ENCODE measurements at regions of chr1 and their contacts with region 1.

Region 1: DNA sequence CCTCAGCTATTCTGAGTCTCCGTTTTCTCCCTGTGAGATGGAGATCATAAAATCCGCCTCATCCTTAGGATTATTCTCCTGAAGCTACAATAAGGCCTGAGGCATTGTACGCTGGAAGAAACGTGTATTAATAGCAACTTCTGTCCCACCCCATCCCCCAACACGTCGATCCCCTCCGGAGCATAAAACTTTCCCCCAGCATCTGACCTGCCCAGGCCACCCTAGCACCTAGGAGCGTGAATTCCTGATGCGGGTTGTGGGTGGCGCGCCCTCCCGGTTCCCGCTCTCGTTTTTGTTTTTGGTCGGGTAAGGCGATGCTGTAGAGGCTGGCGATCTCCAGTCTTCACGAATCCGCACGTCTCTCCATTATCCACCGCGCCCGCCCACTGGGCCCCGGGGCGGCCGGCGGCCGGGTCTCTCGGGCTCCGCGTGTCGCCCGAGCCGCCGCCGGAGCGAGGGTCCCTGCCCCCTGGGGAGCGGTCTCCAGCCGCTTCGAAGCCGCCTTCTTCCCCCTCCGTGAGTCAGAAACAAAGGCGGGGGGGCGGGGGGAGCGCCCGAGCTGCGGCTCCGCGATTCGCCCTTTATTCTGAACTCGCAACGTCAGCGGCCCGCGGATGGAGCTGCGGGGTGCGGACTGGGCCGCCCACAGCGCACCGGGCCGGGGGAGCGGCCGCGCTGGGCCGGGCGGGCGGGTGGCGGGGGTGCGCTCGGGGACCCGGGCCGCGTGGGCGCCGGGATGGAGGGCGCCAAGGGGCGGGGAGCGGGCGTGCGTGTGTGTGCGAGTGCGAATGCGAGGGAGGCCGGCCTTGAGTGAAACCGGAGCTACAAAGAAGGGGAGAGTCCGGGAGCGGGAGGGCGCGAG is at the start of gene PLEKHO1:
- DNase-seq: peak; percentile 82 to 87 (median 84)
- H3K4me3 ChIP-seq: peak within 1 kb of the TSS; percentile 89 to 94 (median 93)
- H3K4me3 Mint-ChIP-seq: peak within 1 kb of the TSS; percentile 99
- H3K27ac ChIP-seq: peak within 1 kb of the TSS; percentile 53 to 97
- H3K27ac Mint-ChIP-seq: peak within 1 kb of the TSS; percentile 87 to 97 (median 91)
- H3K4me1 ChIP-seq: peaks cover 46 to 65% of the 10 kb centered on the region in 2 donors
- H3K4me1 Mint-ChIP-seq: peaks cover 69% of the 10 kb centered on the region
- H3K27me3 ChIP-seq: no peaks in the 10 kb centered on the region
- H3K27me3 Mint-ChIP-seq: peaks cover 15 to 26% (median 16%) of the 10 kb centered on the region in 3 donors
- CTCF ChIP-seq: no peak
- polyA plus RNA-seq, gene PLEKHO1: 87.2 to 170 (median 110) TPM

Region 2: GRCh38 chr1:150094734-150095265 is 54.7 kb before region 1 on chr1:
- intact Hi-C with region 1: loop called in 1 of 2 experiments (anchors 5 kb)
- DNase-seq: no peak
- H3K4me3 ChIP-seq: no peak overlapping the region
- H3K4me3 Mint-ChIP-seq: no peak overlapping the region
- H3K27ac ChIP-seq: no peak overlapping the region
- H3K27ac Mint-ChIP-seq: peak overlapping the region in 1 of 7 donors; percentile 2
- H3K4me1 ChIP-seq: peaks cover 15% of the 10 kb centered on the region in 2 donors
- H3K4me1 Mint-ChIP-seq: peaks cover 24% of the 10 kb centered on the region
- H3K27me3 ChIP-seq: no peaks in the 10 kb centered on the region
- H3K27me3 Mint-ChIP-seq: peaks cover 0 to 2% (median 0%) of the 10 kb centered on the region in 3 donors
- CTCF ChIP-seq: no peak

Region 3: GRCh38 chr1:150162862-150163706 is 13.6 kb after region 1 on chr1:
- intact Hi-C with region 1: loop called in 1 of 2 experiments (anchors 1 kb)
- DNase-seq: peak; percentile 87 to 95 (median 89)
- H3K4me3 ChIP-seq: peak overlapping the region; percentile 35 to 83 (median 42)
- H3K4me3 Mint-ChIP-seq: peak overlapping the region; percentile 82 to 93
- H3K27ac ChIP-seq: peak overlapping the region; percentile 90 to 97
- H3K27ac Mint-ChIP-seq: peak overlapping the region; percentile 95 to 99 (median 99)
- H3K4me1 ChIP-seq: peaks cover 82 to 88% of the 10 kb centered on the region in 2 donors
- H3K4me1 Mint-ChIP-seq: peaks cover 84% of the 10 kb centered on the region
- H3K27me3 ChIP-seq: no peaks in the 10 kb centered on the region
- H3K27me3 Mint-ChIP-seq: no peaks in the 10 kb centered on the region
- CTCF ChIP-seq: no peak

Measured in CD14-positive monocyte (primary cell).